Right ventricle myocardium inferior (tissue), 1 donor: ENCODE measurements at regions of chr20 and their contacts with region 1.

Region 1: GRCh38 chr20:36499723-36500501 is 41.4 kb upstream of the MYL9 start:
- DNase-seq: no peak
- ATAC-seq: no peak

Region 2: GRCh38 chr20:36481381-36482043 is 18.4 kb before region 1 on chr20:
- intact Hi-C with region 1: loop called (anchors 2 kb)
- DNase-seq: no peak
- ATAC-seq: peak; percentile 1

Region 3: DNA sequence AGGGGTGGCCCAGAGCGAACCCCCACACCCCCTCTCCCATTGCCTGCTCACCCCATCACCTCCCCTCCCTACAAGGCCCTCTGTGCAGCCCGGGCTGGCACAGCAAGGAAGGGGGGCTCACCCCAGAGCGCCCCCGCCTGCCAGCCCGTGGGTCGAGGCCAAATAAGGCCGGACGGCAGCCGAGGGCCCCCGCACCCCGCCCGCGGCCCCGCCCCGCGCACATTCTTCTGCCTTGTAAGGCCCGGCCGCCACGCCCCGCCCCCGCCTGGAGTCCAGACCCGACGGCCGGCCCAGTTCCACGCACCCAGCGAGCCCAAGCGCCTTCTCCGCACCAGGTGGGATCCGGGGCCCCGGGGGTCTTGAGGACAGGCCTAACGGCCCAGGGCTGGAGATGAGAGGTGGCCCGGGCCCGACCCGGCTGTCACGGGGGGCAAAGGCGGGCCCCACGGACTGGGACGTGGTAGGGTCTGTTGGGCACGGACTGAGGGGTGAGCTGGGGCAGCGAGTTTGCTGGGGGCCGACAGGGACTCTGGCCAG is 41.4 kb after region 1 on chr20 and contains the start of gene MYL9:
- intact Hi-C with region 1: loop called (anchors 5 kb)
- DNase-seq: peak; percentile 97
- ATAC-seq: peak; percentile 91
- total RNA-seq, gene MYL9: 1,923 TPM